K562 (cell line): ENCODE measurements at regions of chr17 and their contacts with region 1.

Region 1: DNA sequence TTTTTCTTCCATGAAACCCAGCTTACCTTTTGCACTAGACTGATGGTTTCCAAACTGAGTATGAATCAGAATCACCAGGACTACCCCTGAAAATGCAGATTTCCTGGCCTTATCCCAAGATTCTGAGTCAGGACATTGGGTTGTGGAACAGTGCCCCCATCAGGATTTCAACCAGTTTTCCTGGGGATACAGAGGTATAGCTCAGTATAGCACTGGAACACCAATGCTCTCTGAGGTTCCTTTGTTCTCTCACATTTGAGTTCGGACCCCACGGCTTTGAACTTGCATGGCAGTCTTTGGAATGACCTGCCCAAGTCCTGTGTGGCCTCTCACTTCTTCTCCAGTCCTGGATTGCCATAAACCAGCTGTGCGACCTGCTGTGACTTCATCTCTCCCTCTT is 12.8 kb upstream of the CCL8 start:
- DNase-seq: peak in 2 of 4 experiments; percentile 12 to 15
- ATAC-seq: no peak
- H3K4me3 ChIP-seq: no peak overlapping the region
- H3K27ac ChIP-seq: no peak overlapping the region
- H3K4me1 ChIP-seq: no peaks in the 10 kb centered on the region
- H3K27me3 ChIP-seq: peaks cover 0 to 4% of the 10 kb centered on the region in 2 experiments; a peak in 2 of 5 replicates
- CTCF ChIP-seq: peak; percentile 44 to 59 (median 44); a peak in 4 of 6 replicates
- EP300 ChIP-seq: no peak
- POLR2A ChIP-seq: no peak
- RAD21 ChIP-seq: peak; percentile 65 to 70

Region 2: DNA sequence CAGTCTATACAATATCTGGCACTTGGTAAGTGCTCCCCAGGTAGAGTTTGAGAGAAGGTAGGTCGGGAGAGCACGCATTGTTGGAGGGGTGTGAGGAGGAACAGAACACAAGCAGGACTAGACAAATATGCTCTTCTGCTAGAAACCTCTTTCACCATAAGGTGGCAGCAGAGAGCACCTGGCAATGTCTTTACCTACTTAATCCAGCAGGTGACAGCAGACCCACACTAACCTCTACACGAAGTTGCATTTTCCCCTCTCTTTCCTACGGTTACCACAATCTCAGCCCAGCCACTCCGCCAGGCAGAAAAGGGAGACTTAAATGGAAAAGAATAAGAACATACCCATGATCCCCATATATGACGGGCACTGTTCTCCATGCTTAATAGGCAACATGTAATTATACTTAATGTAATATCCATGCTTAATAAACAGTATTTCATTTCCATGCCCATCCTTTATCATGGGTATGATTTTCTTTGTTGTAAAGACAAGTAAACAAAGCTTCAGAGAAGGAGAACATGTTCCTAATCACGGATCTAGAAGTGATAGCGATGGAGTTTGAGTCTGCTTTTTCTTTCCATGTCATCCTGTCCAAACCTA is 106.4 kb before region 1 on chr17:
- CTCF ChIA-PET with region 1: interaction called, 55 read pairs
- POLR2A ChIA-PET with region 1: no interaction called
- in situ Hi-C with region 1: loop called (anchors 10 kb)
- intact Hi-C with region 1: loop called (anchors 1 kb)
- DNase-seq: peak; percentile 79 to 85 (median 80)
- ATAC-seq: peak; percentile 91
- H3K4me3 ChIP-seq: no peak overlapping the region
- H3K27ac ChIP-seq: no peak overlapping the region
- H3K4me1 ChIP-seq: no peaks in the 10 kb centered on the region
- H3K27me3 ChIP-seq: peaks cover 0 to 6% of the 10 kb centered on the region in 2 experiments; a peak in 1 of 5 replicates
- CTCF ChIP-seq: peak; percentile 99 to 100 (median 100)
- EP300 ChIP-seq: no peak
- POLR2A ChIP-seq: no peak
- RAD21 ChIP-seq: peak; percentile 99 to 100